Motor neuron (in vitro differentiated cells): ENCODE measurements at regions of chr1 and their contacts with region 1.

Region 1: GRCh38 chr1:148353461-148354283 is 129.4 kb downstream of the PPIAL4G start:
- ATAC-seq: peak in 5 of 8 experiments; percentile 70 to 94 (median 82)
- H3K4me3 ChIP-seq: peak overlapping the region in 1 of 5 donors; percentile 7
- H3K27ac ChIP-seq: no peak overlapping the region
- H3K4me1 ChIP-seq: no peaks in the 10 kb centered on the region

Region 2: DNA sequence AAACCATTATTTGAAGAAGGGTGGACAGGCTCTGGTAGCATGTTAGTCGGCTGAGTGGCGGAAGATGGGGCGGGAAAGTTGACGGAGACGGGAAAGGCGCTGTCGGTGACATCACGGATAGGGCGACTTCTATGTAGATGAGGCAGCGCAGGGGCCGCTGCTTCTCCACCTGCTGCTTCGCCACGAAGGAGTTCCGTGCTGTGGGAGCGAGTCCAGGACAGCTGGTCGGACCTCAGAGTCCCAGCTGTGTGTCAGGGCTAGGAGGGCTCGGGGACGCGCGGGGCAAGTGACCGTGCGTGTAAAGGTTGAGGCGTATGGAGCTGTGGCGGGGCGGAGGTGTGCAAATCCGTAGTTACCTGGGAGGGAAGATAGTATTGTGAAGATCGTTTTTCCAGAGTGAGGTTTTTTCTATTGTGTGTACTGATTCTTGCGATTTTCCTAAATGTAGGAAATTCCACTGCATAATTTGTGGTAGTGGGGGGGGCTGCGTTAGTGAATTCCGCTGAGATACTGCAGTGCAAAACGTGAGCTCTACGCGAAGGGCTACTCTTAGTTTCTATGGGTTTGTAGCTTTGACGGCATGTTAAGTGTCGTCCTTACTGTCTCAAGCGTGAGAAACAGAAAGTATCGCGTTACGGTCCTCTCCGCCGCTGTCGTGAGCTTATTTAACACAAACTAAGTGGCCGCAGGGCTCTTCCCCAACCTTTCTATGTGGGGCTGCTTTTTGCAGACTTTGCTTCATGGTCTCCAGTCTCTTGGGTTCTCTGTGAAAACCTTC is 90.4 kb before region 1 on chr1:
- in situ Hi-C with region 1: loop called in 1 of 9 experiments (anchors 25 kb)
- ATAC-seq: peak; percentile 66 to 86 (median 82)
- H3K4me3 ChIP-seq: peak overlapping the region; percentile 25 to 44 (median 35)
- H3K27ac ChIP-seq: peak overlapping the region; percentile 46 to 88
- H3K4me1 ChIP-seq: peaks cover 0 to 7% of the 10 kb centered on the region in 2 donors